Transverse colon (tissue), 4 donors: ENCODE measurements at regions of chr4 and their contacts with region 1.

Region 1: GRCh38 chr4:29278585-29278984 is 1441.6 kb upstream of the PCDH7 start:
- DNase-seq: no peak
- H3K4me3 ChIP-seq: no peak overlapping the region
- H3K27ac ChIP-seq: no peak overlapping the region
- H3K4me1 ChIP-seq: no peaks in the 10 kb centered on the region
- H3K27me3 ChIP-seq: no peaks in the 10 kb centered on the region
- CTCF ChIP-seq: no peak
- EP300 ChIP-seq: no peak
- POLR2A ChIP-seq: no peak

Region 2: DNA sequence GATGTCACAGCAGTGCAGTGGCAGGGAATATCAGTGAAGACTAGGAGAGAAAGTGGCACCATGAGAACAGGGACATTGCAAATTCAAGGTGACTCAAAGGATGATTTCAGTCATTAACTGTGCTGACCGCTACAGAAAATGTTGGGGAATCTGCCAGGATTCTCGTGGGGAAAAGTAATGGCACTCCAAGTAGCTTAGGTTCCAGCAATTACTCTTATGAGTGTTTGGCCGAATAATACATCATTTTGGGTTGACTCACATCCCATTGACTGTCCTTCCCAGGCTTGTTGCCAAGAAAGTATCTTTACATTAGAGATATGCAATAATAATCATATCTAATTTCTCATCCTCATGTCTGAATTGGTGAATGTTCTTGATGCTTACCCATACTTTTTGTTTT is 30.5 kb after region 1 on chr4:
- in situ Hi-C with region 1: no loop called
- intact Hi-C with region 1: loop called (anchors 1 kb)
- DNase-seq: no peak
- H3K4me3 ChIP-seq: no peak overlapping the region
- H3K27ac ChIP-seq: no peak overlapping the region
- H3K4me1 ChIP-seq: no peaks in the 10 kb centered on the region
- H3K27me3 ChIP-seq: no peaks in the 10 kb centered on the region
- CTCF ChIP-seq: no peak
- EP300 ChIP-seq: no peak
- POLR2A ChIP-seq: no peak

Region 3: DNA sequence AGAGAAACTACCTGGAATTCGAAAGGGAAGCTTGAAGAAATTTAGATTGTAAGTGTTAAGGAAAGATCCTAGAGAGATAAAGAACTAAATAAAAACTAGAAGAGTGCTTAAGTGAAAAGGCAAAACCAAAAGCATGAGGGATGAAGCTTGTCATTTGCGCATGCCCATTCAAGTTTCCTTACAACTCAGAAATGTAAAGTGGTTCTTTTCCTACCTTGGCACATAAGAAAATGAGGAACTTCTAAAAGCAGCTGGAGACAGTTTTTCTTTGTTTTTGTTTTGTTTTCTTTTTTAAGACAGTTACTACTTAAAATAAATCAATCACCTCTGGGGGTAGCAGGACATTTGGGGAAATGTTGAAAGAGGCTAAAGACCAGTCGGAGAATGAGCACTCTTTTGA is 137.2 kb after region 1 on chr4:
- in situ Hi-C with region 1: no loop called
- intact Hi-C with region 1: no loop called
- DNase-seq: no peak
- H3K4me3 ChIP-seq: no peak overlapping the region
- H3K27ac ChIP-seq: no peak overlapping the region
- H3K4me1 ChIP-seq: no peaks in the 10 kb centered on the region
- H3K27me3 ChIP-seq: no peaks in the 10 kb centered on the region
- CTCF ChIP-seq: no peak
- EP300 ChIP-seq: no peak
- POLR2A ChIP-seq: no peak